BJ (cell line): ENCODE measurements at regions of chr3 and their contacts with region 1.

Region 1: DNA sequence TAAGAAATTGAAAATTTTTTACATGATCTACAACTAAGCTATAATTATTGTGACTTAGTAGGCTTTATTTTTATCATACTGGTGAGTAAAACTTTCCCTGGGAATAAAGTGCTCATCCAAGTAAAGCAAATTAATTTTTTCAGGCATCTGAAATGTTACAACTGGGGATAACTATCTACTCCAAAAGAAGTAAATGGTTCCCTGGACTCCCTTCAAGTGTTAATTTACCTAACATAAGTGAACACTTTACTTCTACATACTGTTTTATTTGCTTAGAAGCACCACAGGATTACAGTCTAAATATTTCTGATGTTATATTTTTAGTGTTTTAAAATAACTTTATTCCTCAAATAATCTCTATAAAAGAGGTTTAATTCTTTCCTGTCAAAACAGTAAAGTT is 57.8 kb downstream of the IFT57 start:
- DNase-seq: no peak
- H3K4me3 ChIP-seq: no peak overlapping the region
- H3K27me3 ChIP-seq: no peaks in the 10 kb centered on the region
- CTCF ChIP-seq: no peak

Region 2: GRCh38 chr3:107674371-107674770 is 490.0 kb before region 1 on chr3:
- CTCF ChIA-PET with region 1: no interaction called
- POLR2A ChIA-PET with region 1: no interaction called
- DNase-seq: no peak
- H3K4me3 ChIP-seq: no peak overlapping the region
- H3K27me3 ChIP-seq: no peaks in the 10 kb centered on the region
- CTCF ChIP-seq: no peak

Region 3: GRCh38 chr3:108117241-108117775 is 47.1 kb before region 1 on chr3:
- CTCF ChIA-PET with region 1: no interaction called
- POLR2A ChIA-PET with region 1: no interaction called
- DNase-seq: no peak
- H3K4me3 ChIP-seq: no peak overlapping the region
- H3K27me3 ChIP-seq: peaks cover 1% of the 10 kb centered on the region; the same call in 1 of the 2 replicates
- CTCF ChIP-seq: no peak

Region 4: GRCh38 chr3:108153451-108153981 is 10.9 kb before region 1 on chr3:
- CTCF ChIA-PET with region 1: interaction called, 10 read pairs
- POLR2A ChIA-PET with region 1: no interaction called
- DNase-seq: no peak
- H3K4me3 ChIP-seq: no peak overlapping the region
- H3K27me3 ChIP-seq: no peaks in the 10 kb centered on the region
- CTCF ChIP-seq: peak; percentile 46